Activated naive CD4-positive, alpha-beta T cell treated with anti-CD3 and anti-CD28 coated beads for 36 hours (primary cell): ENCODE measurements at regions of chr9 and their contacts with region 1.

Region 1: GRCh38 chr9:98074115-98074990 is 17.8 kb downstream of the NANS start:
- DNase-seq: peak; percentile 81
- H3K4me3 Mint-ChIP-seq: peak overlapping the region; percentile 51
- H3K27ac Mint-ChIP-seq: peak overlapping the region; percentile 94
- H3K4me1 Mint-ChIP-seq: peaks cover 34% of the 10 kb centered on the region
- H3K27me3 Mint-ChIP-seq: no peaks in the 10 kb centered on the region

Region 2: GRCh38 chr9:98056269-98057137 is 17.9 kb before region 1 on chr9 and contains the start of gene NANS:
- CTCF ChIA-PET with region 1: interaction called, 15 read pairs
- intact Hi-C with region 1: loop called (anchors 1 kb)
- DNase-seq: peak; percentile 93
- H3K4me3 Mint-ChIP-seq: peak within 1 kb of the TSS; percentile 94
- H3K27ac Mint-ChIP-seq: peak within 1 kb of the TSS; percentile 92
- H3K4me1 Mint-ChIP-seq: peaks cover 27% of the 10 kb centered on the region
- H3K27me3 Mint-ChIP-seq: no peaks in the 10 kb centered on the region
- total RNA-seq, gene NANS: 46.1 to 51.0 TPM

Region 3: GRCh38 chr9:98118640-98119601 is 44.6 kb after region 1 on chr9 and contains the start of gene TRIM14:
- CTCF ChIA-PET with region 1: interaction called, 8 read pairs
- intact Hi-C with region 1: loop called (anchors 1 kb)
- DNase-seq: peak; percentile 60
- H3K4me3 Mint-ChIP-seq: peak within 1 kb of the TSS; percentile 81
- H3K27ac Mint-ChIP-seq: peak within 1 kb of the TSS; percentile 92
- H3K4me1 Mint-ChIP-seq: peaks cover 44% of the 10 kb centered on the region
- H3K27me3 Mint-ChIP-seq: no peaks in the 10 kb centered on the region
- total RNA-seq, gene TRIM14: 49.6 to 55.0 TPM

Region 4: GRCh38 chr9:98207606-98208005 is 133.3 kb after region 1 on chr9:
- CTCF ChIA-PET with region 1: interaction called, 11 read pairs
- intact Hi-C with region 1: loop called (anchors 1 kb)
- DNase-seq: no peak
- H3K4me3 Mint-ChIP-seq: no peak overlapping the region
- H3K27ac Mint-ChIP-seq: no peak overlapping the region
- H3K4me1 Mint-ChIP-seq: peaks cover 2% of the 10 kb centered on the region
- H3K27me3 Mint-ChIP-seq: no peaks in the 10 kb centered on the region

Region 5: GRCh38 chr9:98455256-98456155 is 381.2 kb after region 1 on chr9:
- CTCF ChIA-PET with region 1: no interaction called
- intact Hi-C with region 1: no loop called
- DNase-seq: no peak
- H3K4me3 Mint-ChIP-seq: no peak overlapping the region
- H3K27ac Mint-ChIP-seq: no peak overlapping the region
- H3K4me1 Mint-ChIP-seq: no peaks in the 10 kb centered on the region
- H3K27me3 Mint-ChIP-seq: peaks cover 11% of the 10 kb centered on the region

Region 6: GRCh38 chr9:98796364-98797101 is 722.2 kb after region 1 on chr9 and contains the start of gene ANKS6:
- CTCF ChIA-PET with region 1: no interaction called
- intact Hi-C with region 1: loop called (anchors 10 kb)
- DNase-seq: peak; percentile 81
- H3K4me3 Mint-ChIP-seq: peak within 1 kb of the TSS; percentile 77
- H3K27ac Mint-ChIP-seq: peak within 1 kb of the TSS; percentile 56
- H3K4me1 Mint-ChIP-seq: peaks cover 30% of the 10 kb centered on the region
- H3K27me3 Mint-ChIP-seq: no peaks in the 10 kb centered on the region
- total RNA-seq, gene ANKS6: 14.6 to 15.0 TPM